ENCODE measurements at regions of chr12 and their contacts with region 1.

Region 1: DNA sequence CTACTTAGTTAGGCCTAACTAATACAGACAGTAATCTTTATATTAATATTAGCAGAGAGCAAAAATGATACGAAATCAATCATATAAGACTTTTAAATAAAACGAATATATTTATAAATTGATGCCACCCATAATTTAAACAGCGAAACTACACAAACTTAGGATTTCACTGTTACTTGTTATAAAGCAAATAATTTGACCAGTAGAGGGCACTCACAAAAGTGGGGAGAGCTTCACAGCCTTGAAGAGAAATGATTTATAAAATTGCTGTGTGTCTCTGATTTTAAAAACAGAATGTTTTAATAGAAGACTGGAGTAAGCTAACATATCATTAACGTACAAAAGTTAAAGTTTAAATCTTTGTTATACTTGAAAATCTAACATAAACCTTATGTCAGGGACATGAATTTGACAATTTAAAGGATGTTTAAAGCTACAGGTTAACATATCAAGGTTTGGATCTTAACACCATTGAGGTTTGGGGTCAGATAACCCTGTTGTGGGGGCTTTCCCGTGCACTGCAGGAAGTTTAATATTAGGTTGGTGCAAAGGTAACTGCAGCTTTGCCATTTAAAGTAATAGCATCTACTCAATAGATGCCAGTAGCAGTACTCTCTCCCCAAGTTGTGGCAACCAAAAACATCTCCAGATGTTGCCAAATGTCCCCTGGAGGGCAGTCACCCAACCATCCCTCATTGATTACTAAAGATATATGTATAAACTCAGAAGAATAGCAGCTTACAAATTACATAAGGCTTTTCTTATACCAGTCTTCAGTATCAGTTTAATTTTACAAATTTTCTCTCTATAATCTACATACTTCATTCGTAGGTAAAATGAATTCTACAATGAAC is 9.3 kb downstream of the KRAS start:
- DNase-seq: no peak
- H3K4me3 Mint-ChIP-seq: no peak overlapping the region
- H3K27ac Mint-ChIP-seq: no peak overlapping the region
- H3K4me1 Mint-ChIP-seq: peaks cover 31% of the 10 kb centered on the region
- H3K27me3 Mint-ChIP-seq: no peaks in the 10 kb centered on the region

Region 2: DNA sequence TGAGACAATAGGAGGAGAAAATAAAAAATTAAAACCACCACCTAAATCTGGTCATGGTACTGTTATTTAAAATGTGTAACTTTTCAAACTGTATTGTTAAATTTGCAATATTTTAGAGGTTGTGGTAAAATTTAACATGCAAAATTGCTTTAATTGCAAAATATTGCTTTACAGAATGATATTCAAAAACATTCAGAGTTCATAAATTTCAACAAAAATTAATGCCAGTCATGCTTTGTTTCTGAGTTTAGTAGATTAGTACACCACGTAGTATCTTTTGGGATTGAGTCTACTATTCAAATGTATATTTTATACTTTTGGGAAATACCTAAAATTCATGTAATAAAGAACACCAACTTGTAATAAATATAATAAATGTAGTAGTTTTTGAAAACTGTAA is 28.1 kb before region 1 on chr12:
- CTCF ChIA-PET with region 1: interaction called, 10 read pairs
- DNase-seq: no peak
- H3K4me3 Mint-ChIP-seq: no peak overlapping the region
- H3K27ac Mint-ChIP-seq: no peak overlapping the region
- H3K4me1 Mint-ChIP-seq: no peaks in the 10 kb centered on the region
- H3K27me3 Mint-ChIP-seq: no peaks in the 10 kb centered on the region

Region 3: DNA sequence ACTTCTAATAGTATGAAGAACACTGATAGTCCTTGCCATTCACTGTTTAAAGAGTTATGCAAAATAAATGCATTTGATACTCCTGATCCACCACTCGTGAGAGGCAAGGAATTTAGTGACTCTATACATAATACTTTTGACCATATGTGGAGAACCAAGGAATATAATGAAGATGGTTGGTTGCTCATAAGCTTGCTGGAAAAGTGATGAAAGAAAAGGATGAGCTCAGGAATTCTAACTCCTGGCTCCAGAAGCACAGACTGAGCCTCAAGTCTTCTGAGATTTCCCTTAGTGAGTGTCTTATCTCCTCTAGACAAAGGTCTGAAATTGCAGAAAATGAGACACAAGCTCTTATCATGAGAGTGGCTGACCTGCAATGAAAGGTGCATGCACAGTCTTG is 66.4 kb after region 1 on chr12:
- CTCF ChIA-PET with region 1: no interaction called
- DNase-seq: no peak
- H3K4me3 Mint-ChIP-seq: no peak overlapping the region
- H3K27ac Mint-ChIP-seq: no peak overlapping the region
- H3K4me1 Mint-ChIP-seq: no peaks in the 10 kb centered on the region
- H3K27me3 Mint-ChIP-seq: peaks cover 14% of the 10 kb centered on the region